Activated T-helper 1 cell treated with anti-CD3 and anti-CD28 coated beads, Interleukin-12 subunit alpha, Interleukin-12 subunit beta, Interleukin-2, Interleukin-4 antibody, amounts not matched to agents 30 ng/mL and 10 ng/mL and 1 ng/mL, durations not matched to agents 14 hours and 24 hours and 36 hours (primary cell): ENCODE measurements at regions of chr6 and their contacts with region 1.

Region 1: GRCh38 chr6:137823826-137824555 is 43.1 kb upstream of the TNFAIP3 start:
- DNase-seq: peak; percentile 68
- H3K4me3 Mint-ChIP-seq: peak overlapping the region; percentile 71
- H3K27ac Mint-ChIP-seq: peak overlapping the region; percentile 98
- H3K4me1 Mint-ChIP-seq: peaks cover 88% of the 10 kb centered on the region
- H3K27me3 Mint-ChIP-seq: no peaks in the 10 kb centered on the region

Region 2: DNA sequence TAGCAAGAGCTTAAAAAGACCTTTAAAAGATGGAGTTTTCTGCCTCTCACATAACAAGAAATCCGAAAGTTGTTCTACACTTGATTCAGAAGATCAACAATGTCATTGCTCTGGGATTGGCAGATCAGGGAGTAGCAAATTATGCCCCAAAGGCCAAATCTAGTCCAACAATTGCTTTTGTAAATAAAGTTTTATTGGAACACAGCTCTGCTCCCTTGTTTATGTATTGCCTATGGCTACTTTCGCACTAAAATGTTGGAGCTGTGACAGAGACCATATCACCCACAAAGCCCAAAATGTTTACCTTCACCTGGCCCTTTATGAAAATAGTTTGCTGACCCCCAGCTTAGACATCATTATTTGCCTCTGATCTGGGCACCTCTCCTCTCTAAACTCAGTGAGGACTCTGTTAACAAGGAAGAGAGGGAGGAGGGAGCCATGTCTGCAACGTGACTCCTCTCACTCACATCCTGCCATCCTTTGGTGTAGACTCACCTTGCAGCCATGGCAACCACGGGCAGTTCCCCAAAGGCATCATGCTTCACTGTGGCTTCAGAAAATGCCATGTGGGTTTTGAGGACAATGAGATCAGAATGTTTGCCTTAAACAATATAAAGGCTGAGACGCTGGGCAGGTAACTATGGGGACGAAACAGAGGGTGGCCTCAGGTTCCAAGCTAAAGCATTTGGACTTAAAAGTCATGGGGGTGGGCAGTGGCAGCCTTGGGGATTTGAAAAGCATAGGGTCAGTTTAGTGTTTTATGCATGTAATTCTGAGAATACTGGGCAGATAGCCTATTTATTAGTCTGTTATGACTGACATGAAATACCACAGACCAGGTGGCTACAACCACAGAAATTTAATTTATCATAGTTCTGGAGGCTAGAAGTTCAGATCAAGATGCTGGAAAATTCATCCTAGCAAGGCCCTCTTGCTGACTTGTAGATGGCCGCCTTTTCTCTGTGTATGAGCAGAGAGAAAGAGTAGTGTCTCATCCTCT is 106.6 kb before region 1 on chr6:
- intact Hi-C with region 1: loop called (anchors 1 kb)
- DNase-seq: peak; percentile 81
- H3K4me3 Mint-ChIP-seq: peak overlapping the region; percentile 59
- H3K27ac Mint-ChIP-seq: peak overlapping the region; percentile 90
- H3K4me1 Mint-ChIP-seq: peaks cover 66% of the 10 kb centered on the region
- H3K27me3 Mint-ChIP-seq: peaks cover 5% of the 10 kb centered on the region

Region 3: GRCh38 chr6:137791281-137792159 is 32.5 kb before region 1 on chr6:
- intact Hi-C with region 1: loop called (anchors 1 kb)
- DNase-seq: no peak
- H3K4me3 Mint-ChIP-seq: peak overlapping the region; percentile 59
- H3K27ac Mint-ChIP-seq: peak overlapping the region; percentile 87
- H3K4me1 Mint-ChIP-seq: peaks cover 76% of the 10 kb centered on the region
- H3K27me3 Mint-ChIP-seq: no peaks in the 10 kb centered on the region

Region 4: GRCh38 chr6:137811121-137811915 is 12.7 kb before region 1 on chr6:
- intact Hi-C with region 1: loop called (anchors 1 kb)
- DNase-seq: peak; percentile 78
- H3K4me3 Mint-ChIP-seq: peak overlapping the region; percentile 43
- H3K27ac Mint-ChIP-seq: peak overlapping the region; percentile 81
- H3K4me1 Mint-ChIP-seq: peaks cover 68% of the 10 kb centered on the region
- H3K27me3 Mint-ChIP-seq: no peaks in the 10 kb centered on the region

Region 5: GRCh38 chr6:137849181-137849980 is 25.4 kb after region 1 on chr6:
- intact Hi-C with region 1: loop called (anchors 1 kb)
- DNase-seq: no peak
- H3K4me3 Mint-ChIP-seq: no peak overlapping the region
- H3K27ac Mint-ChIP-seq: peak overlapping the region; percentile 53
- H3K4me1 Mint-ChIP-seq: peaks cover 23% of the 10 kb centered on the region
- H3K27me3 Mint-ChIP-seq: no peaks in the 10 kb centered on the region

Region 6: GRCh38 chr6:137903933-137904821 is 80.2 kb after region 1 on chr6:
- intact Hi-C with region 1: loop called (anchors 1 kb)
- DNase-seq: no peak
- H3K4me3 Mint-ChIP-seq: peak overlapping the region; percentile 19
- H3K27ac Mint-ChIP-seq: peak overlapping the region; percentile 97
- H3K4me1 Mint-ChIP-seq: peaks cover 59% of the 10 kb centered on the region
- H3K27me3 Mint-ChIP-seq: no peaks in the 10 kb centered on the region

Region 7: DNA sequence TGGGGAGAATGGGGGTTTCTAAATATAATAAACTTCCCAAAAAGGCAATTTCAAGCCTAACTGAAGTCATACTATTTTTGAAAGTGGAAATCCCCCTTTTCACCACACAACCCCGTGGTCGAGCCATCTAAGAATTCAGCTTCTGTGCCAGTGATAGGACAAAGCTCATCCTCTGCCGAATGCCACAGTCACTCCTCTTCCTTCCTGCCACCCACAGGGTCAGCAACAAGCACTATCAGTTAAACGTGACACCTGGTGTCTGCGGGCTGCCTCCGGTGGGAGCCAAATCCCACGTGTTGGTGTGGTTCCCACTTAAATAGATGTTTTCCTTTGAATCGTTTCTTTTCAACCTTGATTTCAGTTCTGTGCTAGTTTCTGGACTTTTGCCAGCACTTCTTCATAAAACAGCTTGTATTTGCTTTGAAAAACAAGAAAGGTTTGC is 103.8 kb after region 1 on chr6:
- intact Hi-C with region 1: loop called (anchors 5 kb)
- DNase-seq: peak; percentile 80
- H3K4me3 Mint-ChIP-seq: peak overlapping the region; percentile 52
- H3K27ac Mint-ChIP-seq: peak overlapping the region; percentile 93
- H3K4me1 Mint-ChIP-seq: peaks cover 82% of the 10 kb centered on the region
- H3K27me3 Mint-ChIP-seq: no peaks in the 10 kb centered on the region